CD8-positive, alpha-beta T cell (primary cell): ENCODE measurements at regions of chr15 and their contacts with region 1.

Region 1: GRCh38 chr15:82709421-82710207 is at the start of gene AP3B2:
- DNase-seq: peak; percentile 40 to 82 (median 67)
- ATAC-seq: peak; percentile 95
- H3K4me3 ChIP-seq: peak within 1 kb of the TSS; percentile 44 to 81
- H3K4me3 Mint-ChIP-seq: peak within 1 kb of the TSS; percentile 76
- H3K27ac ChIP-seq: no peak within 1 kb of the TSS
- H3K27ac Mint-ChIP-seq: no peak within 1 kb of the TSS
- H3K4me1 ChIP-seq: peaks cover 13% of the 10 kb centered on the region
- H3K4me1 Mint-ChIP-seq: peaks cover 1% of the 10 kb centered on the region
- H3K27me3 ChIP-seq: peaks cover 0 to 6% of the 10 kb centered on the region in 2 experiments
- H3K27me3 Mint-ChIP-seq: peaks cover 25% of the 10 kb centered on the region
- CTCF ChIP-seq: no peak
- total RNA-seq, gene AP3B2: 0.81 to 0.90 TPM

Region 2: GRCh38 chr15:82647045-82647834 is 62.4 kb before region 1 on chr15 and contains the start of gene CPEB1:
- CTCF ChIA-PET with region 1: no interaction called
- POLR2A ChIA-PET with region 1: no interaction called
- intact Hi-C with region 1: loop called in 1 of 2 experiments (anchors 5 kb)
- DNase-seq: peak in 8 of 9 experiments; percentile 9 to 64 (median 50)
- ATAC-seq: peak; percentile 60
- H3K4me3 ChIP-seq: peak within 1 kb of the TSS; percentile 32 to 60
- H3K4me3 Mint-ChIP-seq: peak within 1 kb of the TSS; percentile 78
- H3K27ac ChIP-seq: no peak within 1 kb of the TSS
- H3K27ac Mint-ChIP-seq: no peak within 1 kb of the TSS
- H3K4me1 ChIP-seq: peaks cover 20% of the 10 kb centered on the region
- H3K4me1 Mint-ChIP-seq: peaks cover 12% of the 10 kb centered on the region
- H3K27me3 ChIP-seq: peaks cover 0 to 11% of the 10 kb centered on the region in 2 experiments
- H3K27me3 Mint-ChIP-seq: peaks cover 21% of the 10 kb centered on the region
- CTCF ChIP-seq: peak; percentile 22
- total RNA-seq, gene CPEB1: 0.27 to 0.53 TPM

Region 3: DNA sequence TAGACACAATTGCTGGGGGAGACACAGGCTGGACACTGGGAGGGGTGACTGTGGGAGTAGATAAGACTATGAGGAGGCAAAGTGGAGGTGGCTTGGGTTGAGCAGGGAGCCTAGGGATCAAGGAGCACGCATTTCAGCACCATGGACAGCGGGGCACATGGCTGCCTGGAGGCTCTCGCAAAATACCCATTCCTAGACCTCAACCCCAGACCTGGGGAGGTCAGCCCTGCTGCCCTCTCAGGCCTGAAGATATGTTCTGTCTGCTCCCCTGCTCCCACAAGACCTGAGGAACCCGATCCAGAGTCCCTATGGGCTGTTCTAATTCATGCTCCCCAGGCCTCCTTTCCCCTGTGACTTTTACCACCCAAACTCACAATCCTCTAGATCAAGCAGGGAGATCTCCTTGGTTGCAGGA is 46.4 kb before region 1 on chr15:
- CTCF ChIA-PET with region 1: no interaction called
- POLR2A ChIA-PET with region 1: no interaction called
- intact Hi-C with region 1: loop called (anchors 1 kb)
- DNase-seq: peak in 7 of 9 experiments; percentile 8 to 58 (median 51)
- ATAC-seq: peak; percentile 48
- H3K4me3 ChIP-seq: no peak overlapping the region
- H3K4me3 Mint-ChIP-seq: no peak overlapping the region
- H3K27ac ChIP-seq: no peak overlapping the region
- H3K27ac Mint-ChIP-seq: no peak overlapping the region
- H3K4me1 ChIP-seq: no peaks in the 10 kb centered on the region
- H3K4me1 Mint-ChIP-seq: no peaks in the 10 kb centered on the region
- H3K27me3 ChIP-seq: peaks cover 0 to 4% of the 10 kb centered on the region in 2 experiments
- H3K27me3 Mint-ChIP-seq: peaks cover 37% of the 10 kb centered on the region
- CTCF ChIP-seq: no peak

Region 4: DNA sequence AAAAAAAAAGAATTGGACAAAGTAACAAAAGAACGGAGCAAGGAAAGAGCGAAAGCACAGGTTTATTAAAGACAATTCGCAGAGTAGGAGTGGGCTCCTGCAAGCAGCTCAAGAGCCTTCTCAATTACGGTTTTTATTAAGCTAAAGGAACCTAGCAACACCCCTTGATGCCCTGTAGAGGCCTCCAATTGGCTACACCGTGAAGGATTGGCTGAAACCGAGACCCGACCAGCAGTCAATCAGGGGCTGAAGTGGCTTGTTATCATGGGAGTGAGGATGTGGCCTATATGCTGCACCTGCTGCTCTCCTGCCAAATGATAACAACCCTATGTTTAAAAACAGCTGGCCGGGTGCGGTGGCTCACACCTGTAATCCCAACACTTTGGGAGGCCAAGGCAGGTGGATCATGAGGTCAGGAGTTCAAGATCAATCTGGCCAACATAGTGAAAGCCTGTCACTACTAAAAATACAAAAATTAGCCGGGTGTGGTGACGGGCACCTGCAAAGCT is 20.5 kb after region 1 on chr15:
- CTCF ChIA-PET with region 1: no interaction called
- POLR2A ChIA-PET with region 1: no interaction called
- intact Hi-C with region 1: no loop called
- DNase-seq: no peak
- ATAC-seq: no peak
- H3K4me3 ChIP-seq: no peak overlapping the region
- H3K4me3 Mint-ChIP-seq: no peak overlapping the region
- H3K27ac ChIP-seq: no peak overlapping the region
- H3K27ac Mint-ChIP-seq: no peak overlapping the region
- H3K4me1 ChIP-seq: no peaks in the 10 kb centered on the region
- H3K4me1 Mint-ChIP-seq: no peaks in the 10 kb centered on the region
- H3K27me3 ChIP-seq: no peaks in the 10 kb centered on the region
- H3K27me3 Mint-ChIP-seq: no peaks in the 10 kb centered on the region
- CTCF ChIP-seq: no peak

Region 5: DNA sequence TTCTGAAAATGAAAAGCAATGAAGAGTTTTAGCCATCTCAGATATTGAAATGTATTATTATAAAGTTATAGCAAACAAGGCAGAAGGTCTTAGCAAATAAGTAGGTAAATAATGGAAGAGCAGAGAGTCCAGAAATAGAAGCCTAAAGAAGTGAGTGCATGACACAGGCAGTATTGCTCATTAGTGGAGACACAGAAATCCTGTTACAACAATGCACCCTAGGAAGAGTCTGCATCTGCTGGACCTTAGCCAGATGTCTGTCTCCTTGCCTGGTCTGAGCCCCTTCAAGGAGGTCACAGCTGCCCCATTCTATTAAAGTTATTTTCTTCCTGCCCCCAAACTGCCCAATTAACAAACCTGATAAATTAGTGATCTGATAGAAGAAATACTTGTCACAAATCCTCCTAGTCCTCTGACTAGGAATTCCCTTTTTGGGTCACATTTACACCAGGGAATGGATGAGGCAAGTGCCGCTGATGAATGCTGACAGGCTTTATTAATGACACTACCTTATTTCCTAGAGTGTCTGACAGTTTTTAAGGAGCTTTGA is 191.0 kb after region 1 on chr15:
- CTCF ChIA-PET with region 1: no interaction called
- POLR2A ChIA-PET with region 1: no interaction called
- intact Hi-C with region 1: no loop called
- DNase-seq: no peak
- ATAC-seq: no peak
- H3K4me3 ChIP-seq: no peak overlapping the region
- H3K4me3 Mint-ChIP-seq: no peak overlapping the region
- H3K27ac ChIP-seq: no peak overlapping the region
- H3K27ac Mint-ChIP-seq: no peak overlapping the region
- H3K4me1 ChIP-seq: no peaks in the 10 kb centered on the region
- H3K4me1 Mint-ChIP-seq: no peaks in the 10 kb centered on the region
- H3K27me3 ChIP-seq: no peaks in the 10 kb centered on the region
- H3K27me3 Mint-ChIP-seq: no peaks in the 10 kb centered on the region
- CTCF ChIP-seq: no peak